K562 (cell line): ENCODE measurements at regions of chr1 and their contacts with region 1.

Region 1: DNA sequence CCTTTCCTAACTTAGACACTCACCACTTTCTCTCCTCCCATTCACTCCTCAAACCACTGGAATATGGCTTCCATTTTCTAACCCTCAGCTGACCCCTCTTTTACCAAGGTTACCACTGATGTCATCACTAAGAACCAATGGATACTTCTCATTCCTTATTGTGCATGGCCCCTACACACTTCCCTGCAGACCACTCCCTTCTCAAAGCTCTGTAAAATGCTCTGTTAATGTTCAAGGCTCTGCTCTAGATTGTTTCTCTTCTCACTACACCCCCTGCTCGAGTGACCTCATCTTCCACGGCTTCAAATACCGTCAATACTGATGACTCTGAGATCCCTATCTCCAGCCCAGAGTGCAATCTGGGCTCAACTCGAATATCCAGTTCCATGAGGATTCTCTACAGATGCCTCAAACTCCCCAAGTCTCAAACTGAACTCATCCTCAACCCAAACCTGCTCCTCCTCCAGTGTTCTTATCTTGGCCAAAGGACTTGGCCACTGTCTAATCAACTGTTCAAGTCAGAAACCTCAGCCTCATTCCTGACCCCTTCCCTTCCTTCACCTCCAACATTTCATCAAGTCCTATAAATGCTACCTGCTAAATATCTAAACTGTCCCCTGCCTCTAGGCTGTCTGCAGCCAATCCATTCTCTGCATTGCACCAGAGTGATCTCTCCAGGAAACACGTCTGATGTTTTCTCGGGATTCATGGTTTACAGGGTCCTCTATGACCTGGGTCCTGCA is 41.3 kb upstream of the BMP8B start:
- DNase-seq: peak; percentile 36 to 51 (median 39)
- ATAC-seq: peak; percentile 37
- H3K4me3 ChIP-seq: no peak overlapping the region
- H3K27ac ChIP-seq: no peak overlapping the region
- H3K4me1 ChIP-seq: peaks cover 11 to 33% of the 10 kb centered on the region in 2 experiments
- H3K27me3 ChIP-seq: no peaks in the 10 kb centered on the region
- CTCF ChIP-seq: no peak
- EP300 ChIP-seq: no peak
- POLR2A ChIP-seq: no peak
- RAD21 ChIP-seq: no peak

Region 2: GRCh38 chr1:39816415-39817090 is 13.4 kb before region 1 on chr1:
- CTCF ChIA-PET with region 1: no interaction called
- POLR2A ChIA-PET with region 1: interaction called, 12 read pairs
- in situ Hi-C with region 1: no loop called
- intact Hi-C with region 1: no loop called
- DNase-seq: peak; percentile 84 to 88 (median 86)
- ATAC-seq: peak; percentile 92
- H3K4me3 ChIP-seq: no peak overlapping the region
- H3K27ac ChIP-seq: no peak overlapping the region
- H3K4me1 ChIP-seq: peaks cover 9 to 11% of the 10 kb centered on the region in 2 experiments; a peak in 4 of 5 replicates
- H3K27me3 ChIP-seq: peaks cover 2 to 8% of the 10 kb centered on the region in 2 experiments; a peak in 2 of 5 replicates
- CTCF ChIP-seq: peak; percentile 87 to 94 (median 91)
- EP300 ChIP-seq: no peak
- POLR2A ChIP-seq: no peak
- RAD21 ChIP-seq: peak; percentile 95 to 99

Region 3: GRCh38 chr1:39845275-39846116 is 15.5 kb after region 1 on chr1:
- CTCF ChIA-PET with region 1: no interaction called
- POLR2A ChIA-PET with region 1: interaction called, 20 read pairs
- in situ Hi-C with region 1: no loop called
- intact Hi-C with region 1: no loop called
- DNase-seq: peak; percentile 43 to 82 (median 60)
- ATAC-seq: peak; percentile 86
- H3K4me3 ChIP-seq: no peak overlapping the region
- H3K27ac ChIP-seq: no peak overlapping the region
- H3K4me1 ChIP-seq: peaks cover 5 to 7% of the 10 kb centered on the region in 2 experiments; a peak in 2 of 5 replicates
- H3K27me3 ChIP-seq: no peaks in the 10 kb centered on the region
- CTCF ChIP-seq: no peak
- EP300 ChIP-seq: no peak
- POLR2A ChIP-seq: no peak
- RAD21 ChIP-seq: no peak

Region 4: DNA sequence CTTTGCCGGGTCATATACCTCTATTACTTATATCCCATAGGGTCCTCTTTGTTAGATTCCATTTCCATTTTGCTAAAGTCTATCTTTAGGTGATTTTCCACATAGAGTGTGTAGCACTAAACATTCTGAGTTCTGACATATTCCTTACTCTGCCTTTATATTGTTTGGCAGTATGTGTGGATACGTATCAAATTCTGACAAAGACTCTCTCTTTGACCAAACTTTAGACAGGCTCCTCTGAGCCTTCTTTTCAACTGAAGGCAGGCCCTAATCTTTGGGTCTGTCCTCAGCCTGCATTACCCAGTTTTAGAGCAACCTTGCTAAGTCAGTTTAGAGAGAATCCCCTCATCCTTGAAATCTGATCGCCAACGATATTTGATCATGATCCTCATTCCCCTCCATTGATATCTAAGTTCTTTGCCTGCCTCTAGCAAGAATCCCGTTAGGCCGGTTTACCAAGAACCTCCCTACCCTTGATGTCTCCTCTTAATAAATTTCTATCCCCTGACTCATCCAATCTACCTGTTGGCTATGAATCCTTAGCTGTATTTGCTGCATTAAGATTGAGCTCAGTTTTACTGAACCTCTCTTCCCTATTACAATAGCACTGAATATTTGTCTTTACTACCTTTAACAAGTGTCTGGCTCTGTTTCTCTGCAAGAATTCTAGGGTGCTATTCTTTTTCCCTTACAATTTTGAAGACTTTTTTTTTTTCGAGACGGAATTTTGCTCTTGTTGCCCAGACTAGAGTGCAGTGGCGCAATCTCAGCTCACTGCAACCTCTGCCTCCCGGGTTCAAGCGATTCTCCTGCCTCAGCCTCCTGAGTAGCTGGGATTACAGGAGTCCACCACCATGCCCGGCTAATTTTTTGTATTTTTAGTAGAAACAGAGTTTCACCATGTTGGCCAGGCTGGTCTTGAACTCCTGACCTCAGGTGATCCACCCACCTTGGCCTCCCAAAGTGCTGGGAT is 277.6 kb after region 1 on chr1:
- CTCF ChIA-PET with region 1: no interaction called
- POLR2A ChIA-PET with region 1: no interaction called
- in situ Hi-C with region 1: no loop called
- intact Hi-C with region 1: no loop called
- DNase-seq: no peak
- ATAC-seq: no peak
- H3K4me3 ChIP-seq: no peak overlapping the region
- H3K27ac ChIP-seq: no peak overlapping the region
- H3K4me1 ChIP-seq: no peaks in the 10 kb centered on the region
- H3K27me3 ChIP-seq: no peaks in the 10 kb centered on the region
- CTCF ChIP-seq: no peak
- EP300 ChIP-seq: no peak
- POLR2A ChIP-seq: no peak
- RAD21 ChIP-seq: no peak